Gastrocnemius medialis (tissue), 4 donors: ENCODE measurements at regions of chr1 and their contacts with region 1.

Region 1: GRCh38 chr1:246907472-246907871 is 24.3 kb downstream of the AHCTF1 start:
- DNase-seq: no peak
- ATAC-seq: peak; percentile 42 to 89
- H3K4me3 ChIP-seq: no peak overlapping the region
- H3K27ac ChIP-seq: no peak overlapping the region
- H3K4me1 ChIP-seq: peaks cover 3 to 4% of the 10 kb centered on the region in 2 donors
- H3K27me3 ChIP-seq: no peaks in the 10 kb centered on the region
- CTCF ChIP-seq: peak in 4 of 5 experiments; percentile 24 to 54 (median 44)
- POLR2A ChIP-seq: no peak

Region 2: GRCh38 chr1:246632281-246633087 is 275.0 kb before region 1 on chr1:
- in situ Hi-C with region 1: no loop called
- intact Hi-C with region 1: no loop called
- DNase-seq: no peak
- ATAC-seq: peak; percentile 39 to 42
- H3K4me3 ChIP-seq: no peak overlapping the region
- H3K27ac ChIP-seq: peak overlapping the region; percentile 3 to 62 (median 20)
- H3K4me1 ChIP-seq: peaks cover 0 to 8% of the 10 kb centered on the region in 2 donors
- H3K27me3 ChIP-seq: no peaks in the 10 kb centered on the region
- CTCF ChIP-seq: no peak
- POLR2A ChIP-seq: no peak

Region 3: GRCh38 chr1:246860401-246860800 is 47.1 kb before region 1 on chr1:
- in situ Hi-C with region 1: no loop called
- intact Hi-C with region 1: no loop called
- DNase-seq: no peak
- ATAC-seq: no peak
- H3K4me3 ChIP-seq: no peak overlapping the region
- H3K27ac ChIP-seq: no peak overlapping the region
- H3K4me1 ChIP-seq: no peaks in the 10 kb centered on the region
- H3K27me3 ChIP-seq: no peaks in the 10 kb centered on the region
- CTCF ChIP-seq: no peak
- POLR2A ChIP-seq: no peak

Region 4: DNA sequence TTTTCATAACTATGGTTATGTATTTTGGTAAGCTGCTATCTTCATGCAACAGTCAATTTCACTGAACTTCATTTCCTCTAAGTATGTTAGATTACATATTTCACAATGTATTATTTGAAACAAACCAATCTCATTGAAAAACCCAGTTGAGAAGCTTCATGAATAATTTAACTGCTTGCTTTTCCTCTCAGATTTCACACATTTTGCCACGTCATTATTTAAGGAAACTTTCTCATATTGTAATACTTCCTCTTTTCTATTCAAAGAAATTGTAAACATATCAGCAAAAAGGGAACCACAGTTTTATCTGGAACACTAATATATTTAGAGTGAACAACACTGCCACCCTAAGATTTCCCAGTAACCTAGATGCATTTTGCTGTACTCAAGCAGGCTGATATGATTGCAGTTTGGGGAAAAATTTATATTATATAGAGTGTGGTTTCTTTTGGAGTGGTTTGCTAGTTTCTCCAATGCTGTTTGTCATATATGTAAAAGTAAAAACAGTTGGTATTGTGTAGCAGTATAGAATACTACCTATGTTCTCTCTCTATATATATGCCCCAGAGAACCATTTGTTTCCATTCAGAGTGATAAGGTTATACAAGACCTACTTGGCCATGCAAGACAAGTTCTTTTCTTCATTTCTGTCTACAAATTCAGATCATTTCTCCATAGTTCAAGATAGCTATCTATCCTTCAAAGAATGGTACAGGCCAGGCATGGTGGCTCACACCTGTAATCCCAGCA is 52.6 kb after region 1 on chr1:
- in situ Hi-C with region 1: loop called in 1 of 4 experiments (anchors 10 kb)
- intact Hi-C with region 1: no loop called
- DNase-seq: no peak
- ATAC-seq: no peak
- H3K4me3 ChIP-seq: no peak overlapping the region
- H3K27ac ChIP-seq: no peak overlapping the region
- H3K4me1 ChIP-seq: no peaks in the 10 kb centered on the region
- H3K27me3 ChIP-seq: no peaks in the 10 kb centered on the region
- CTCF ChIP-seq: peak in 1 of 5 experiments; percentile 9
- POLR2A ChIP-seq: no peak

Region 5: GRCh38 chr1:246971090-246971721 is 63.7 kb after region 1 on chr1:
- in situ Hi-C with region 1: loop called in 3 of 4 experiments (anchors 5 to 10 kb)
- intact Hi-C with region 1: loop called (anchors 1 kb)
- DNase-seq: peak; percentile 18 to 61
- ATAC-seq: peak in 1 of 2 donors; percentile 51
- H3K4me3 ChIP-seq: peak overlapping the region in 1 of 4 donors; percentile 40
- H3K27ac ChIP-seq: no peak overlapping the region
- H3K4me1 ChIP-seq: no peaks in the 10 kb centered on the region
- H3K27me3 ChIP-seq: peaks cover 0 to 4% (median 0%) of the 10 kb centered on the region in 3 donors
- CTCF ChIP-seq: peak; percentile 68 to 89 (median 75)
- POLR2A ChIP-seq: no peak